ENCODE measurements at regions of chr7 and their contacts with region 1.

Region 1: GRCh38 chr7:518630-519483 is 789 bp downstream of the PDGFA start:
- DNase-seq: peak; percentile 64 to 92 (median 82)
- H3K4me3 ChIP-seq: peak overlapping the region; percentile 75 to 95 (median 88)
- H3K27ac ChIP-seq: peak overlapping the region; percentile 82 to 99 (median 98)
- H3K27me3 ChIP-seq: peaks cover 0 to 21% (median 0%) of the 10 kb centered on the region in 45 donors
- CTCF ChIP-seq: peak in 15 of 56 donors; percentile 8 to 37 (median 19)

Region 2: DNA sequence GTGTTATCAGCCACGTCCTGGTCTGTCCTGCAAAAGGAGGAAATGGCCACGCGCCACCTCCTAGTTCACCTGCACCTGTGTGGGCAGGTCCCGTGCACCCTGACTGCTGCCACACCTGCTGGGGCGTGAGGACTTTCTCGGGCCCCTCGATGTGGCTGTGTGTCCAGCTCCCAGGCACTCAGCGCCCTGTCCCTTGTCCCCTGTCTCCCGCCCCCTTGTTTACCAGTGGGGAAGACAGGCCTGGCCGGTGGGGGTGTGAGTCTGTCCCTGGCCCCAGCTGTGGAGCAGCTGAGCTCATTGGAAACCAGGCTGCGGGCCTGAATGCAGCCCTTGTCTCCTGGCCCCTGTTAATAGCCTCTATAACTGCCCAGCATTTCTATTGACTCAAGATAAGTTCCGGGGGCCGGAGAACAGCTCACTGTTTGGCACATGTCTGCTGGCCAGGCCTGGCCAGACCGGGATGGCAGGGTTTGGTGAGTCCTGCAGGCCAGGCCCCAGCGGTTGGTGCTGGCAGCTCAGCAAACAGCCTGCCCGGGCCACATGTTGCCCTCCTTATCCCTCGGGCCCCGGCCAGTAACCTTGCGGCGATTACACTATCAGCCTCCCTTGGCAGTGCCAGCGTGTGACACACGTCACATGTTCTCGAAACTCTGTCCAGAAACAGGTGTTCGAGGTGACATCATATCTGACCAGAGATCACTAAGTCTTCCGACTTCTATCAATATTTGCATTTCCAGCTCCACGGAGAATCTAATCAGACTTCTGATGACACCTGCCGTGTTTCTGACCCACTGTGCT is 176.8 kb before region 1 on chr7:
- intact Hi-C with region 1: loop called in 1 of 2 experiments (anchors 1 kb)
- DNase-seq: peak in 9 of 10 donors; percentile 80 to 96 (median 90)
- H3K4me3 ChIP-seq: no peak overlapping the region
- H3K27ac ChIP-seq: peak overlapping the region in 29 of 59 donors; percentile 1 to 81 (median 54)
- H3K27me3 ChIP-seq: no peaks in the 10 kb centered on the region
- CTCF ChIP-seq: peak in 23 of 56 donors; percentile 13 to 45 (median 32)

Region 3: GRCh38 chr7:424961-425793 is 93.7 kb before region 1 on chr7:
- intact Hi-C with region 1: no loop called
- DNase-seq: peak; percentile 18 to 86 (median 69)
- H3K4me3 ChIP-seq: peak overlapping the region in 17 of 59 donors; percentile 0 to 53 (median 15)
- H3K27ac ChIP-seq: peak overlapping the region in 27 of 59 donors; percentile 6 to 64 (median 36)
- H3K27me3 ChIP-seq: peaks cover 0 to 2% (median 0%) of the 10 kb centered on the region in 45 donors
- CTCF ChIP-seq: peak in 1 of 56 donors; percentile 13

Region 4: DNA sequence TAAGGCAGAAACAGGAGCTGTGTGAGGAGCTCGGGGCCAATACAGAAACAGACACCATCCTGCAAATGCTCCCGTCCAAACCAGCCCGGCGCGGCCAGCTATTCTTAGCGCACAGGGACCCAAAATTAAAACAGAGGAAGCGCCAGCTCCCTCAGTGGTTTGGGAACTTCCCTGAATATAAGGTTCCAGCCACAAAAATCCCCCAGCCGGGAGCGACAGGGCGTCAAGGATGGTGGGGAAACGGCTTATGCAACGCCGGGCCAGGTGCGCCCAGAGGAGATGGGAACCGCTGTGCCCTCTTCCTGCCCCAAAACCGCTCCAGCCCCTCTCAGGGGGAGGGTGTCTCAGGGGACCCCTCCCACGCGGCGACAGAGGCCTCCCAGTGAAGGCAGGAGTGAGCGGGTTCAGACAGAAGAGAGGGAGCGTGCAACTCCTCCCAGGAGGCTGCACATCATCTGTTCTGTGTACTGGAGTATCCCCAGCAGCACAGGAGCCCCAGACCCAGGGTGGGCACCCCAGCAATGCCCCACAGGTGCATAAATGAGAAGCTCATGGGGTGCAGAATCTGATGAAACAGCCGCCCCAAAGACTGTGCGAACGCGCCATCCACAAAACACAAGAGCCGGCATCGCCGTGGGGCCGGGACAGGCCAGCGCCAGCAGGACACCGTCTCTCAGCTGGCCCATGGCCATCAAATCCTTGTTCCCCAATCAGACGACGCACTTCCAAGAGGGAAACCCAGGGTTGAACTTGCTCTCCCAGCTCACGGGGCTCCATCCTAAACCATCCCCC is 74.7 kb after region 1 on chr7:
- intact Hi-C with region 1: loop called in 1 of 2 experiments (anchors 2 kb)
- DNase-seq: peak in 5 of 10 donors; percentile 33 to 72 (median 60)
- H3K4me3 ChIP-seq: peak overlapping the region in 7 of 59 donors; percentile 6 to 42 (median 12)
- H3K27ac ChIP-seq: peak overlapping the region in 38 of 59 donors; percentile 11 to 82 (median 51)
- H3K27me3 ChIP-seq: no peaks in the 10 kb centered on the region
- CTCF ChIP-seq: no peak

Region 5: DNA sequence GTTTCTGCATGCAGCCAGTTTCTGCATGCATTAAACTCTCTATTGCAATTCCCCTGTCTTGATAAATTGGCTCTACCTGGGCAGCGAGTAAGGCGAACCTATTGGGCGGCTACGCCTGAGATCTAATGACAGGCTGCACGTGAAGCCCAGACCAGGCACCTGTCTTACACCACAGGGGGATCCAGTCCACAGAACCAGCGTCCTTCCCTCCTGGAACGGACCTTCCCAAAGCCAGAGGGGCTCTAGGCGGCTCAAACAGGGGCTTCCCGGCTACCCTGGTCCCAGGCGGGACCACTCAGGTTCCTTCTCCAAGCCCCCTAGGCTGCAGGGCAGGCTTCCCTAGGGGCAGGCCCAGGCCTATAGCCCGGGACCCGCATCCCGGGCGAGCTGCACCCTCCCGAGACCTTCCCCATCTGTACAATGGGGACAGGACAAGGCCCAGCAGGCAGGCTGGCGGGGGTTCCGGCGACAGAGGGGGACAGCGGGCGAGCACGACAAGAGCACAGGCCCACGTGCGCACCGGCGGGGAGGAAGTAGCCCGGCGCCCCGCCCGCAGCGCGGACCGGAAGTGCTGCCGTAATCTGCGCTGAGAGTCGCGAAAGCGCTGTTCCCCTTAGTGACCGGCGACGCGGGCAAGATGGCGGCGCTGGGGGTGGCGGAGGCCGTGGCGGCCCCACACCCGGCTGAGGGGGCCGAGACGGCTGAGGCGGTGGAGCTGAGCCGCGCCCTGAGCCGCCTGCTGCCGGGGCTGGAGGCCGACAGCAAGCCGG is 207.4 kb after region 1 on chr7 and contains the start of gene DNAAF5:
- intact Hi-C with region 1: loop called (anchors 5 to 10 kb)
- DNase-seq: peak; percentile 75 to 92 (median 88)
- H3K4me3 ChIP-seq: peak within 1 kb of the TSS; percentile 62 to 98 (median 79)
- H3K27ac ChIP-seq: peak within 1 kb of the TSS in 44 of 59 donors; percentile 3 to 87 (median 65)
- H3K27me3 ChIP-seq: no peaks in the 10 kb centered on the region
- CTCF ChIP-seq: peak in 27 of 56 donors; percentile 9 to 48 (median 28)
- total RNA-seq, gene DNAAF5: 12.7 to 37.3 (median 20.9) TPM

Region 6: DNA sequence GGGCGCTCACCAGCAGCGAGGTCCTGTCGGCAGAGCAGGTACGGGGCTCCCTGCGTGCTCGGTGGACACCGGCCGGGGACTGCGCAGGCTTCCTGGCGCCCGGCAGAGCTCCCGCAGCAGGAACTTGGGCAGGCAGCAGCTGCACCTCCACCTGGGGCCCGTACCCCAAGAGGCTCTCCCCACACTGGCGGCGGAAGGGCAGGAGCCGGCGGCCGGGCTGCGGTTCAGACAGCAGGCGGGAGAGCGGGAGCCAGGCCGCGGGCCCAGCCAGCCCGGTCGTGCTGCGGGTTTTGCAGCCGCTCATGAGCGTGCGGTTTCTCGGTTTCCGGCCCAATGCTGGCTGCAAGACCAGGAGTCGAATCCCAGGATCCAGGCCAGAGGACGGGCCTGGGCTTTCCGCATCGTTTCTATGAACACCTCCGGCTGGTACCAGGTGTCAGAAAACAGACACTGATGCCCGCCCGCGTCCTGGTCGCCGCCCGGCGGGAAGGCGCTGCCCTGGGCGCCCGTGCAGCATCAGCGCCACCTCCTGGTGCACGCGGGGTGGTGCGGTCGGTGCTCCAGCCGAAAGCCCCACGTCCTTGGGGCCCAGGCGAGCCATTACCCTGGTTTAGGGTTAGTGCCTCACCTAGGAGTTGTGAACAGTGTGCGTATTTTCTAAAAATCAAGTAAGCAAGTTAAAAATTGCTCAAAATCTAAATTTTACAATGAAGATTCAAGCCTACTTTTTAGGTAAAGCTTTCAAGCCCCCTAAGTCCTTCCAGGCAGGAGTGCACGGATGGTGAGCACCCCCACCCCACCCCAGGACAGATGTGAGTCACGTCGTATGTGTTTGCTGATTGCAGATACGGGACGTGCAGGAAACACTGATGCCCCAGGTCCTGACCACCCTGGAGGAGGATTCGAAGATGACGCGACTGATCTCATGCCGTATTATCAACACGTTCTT is 255.6 kb after region 1 on chr7:
- intact Hi-C with region 1: loop called (anchors 5 to 10 kb)
- DNase-seq: peak in 9 of 10 donors; percentile 49 to 87 (median 60)
- H3K4me3 ChIP-seq: peak overlapping the region in 10 of 59 donors; percentile 10 to 36 (median 20)
- H3K27ac ChIP-seq: peak overlapping the region in 7 of 59 donors; percentile 20 to 83 (median 29)
- H3K27me3 ChIP-seq: no peaks in the 10 kb centered on the region
- CTCF ChIP-seq: peak; percentile 62 to 97 (median 90)